WTC11 (cell line): ENCODE measurements at regions of chr1 and their contacts with region 1.

Region 1: DNA sequence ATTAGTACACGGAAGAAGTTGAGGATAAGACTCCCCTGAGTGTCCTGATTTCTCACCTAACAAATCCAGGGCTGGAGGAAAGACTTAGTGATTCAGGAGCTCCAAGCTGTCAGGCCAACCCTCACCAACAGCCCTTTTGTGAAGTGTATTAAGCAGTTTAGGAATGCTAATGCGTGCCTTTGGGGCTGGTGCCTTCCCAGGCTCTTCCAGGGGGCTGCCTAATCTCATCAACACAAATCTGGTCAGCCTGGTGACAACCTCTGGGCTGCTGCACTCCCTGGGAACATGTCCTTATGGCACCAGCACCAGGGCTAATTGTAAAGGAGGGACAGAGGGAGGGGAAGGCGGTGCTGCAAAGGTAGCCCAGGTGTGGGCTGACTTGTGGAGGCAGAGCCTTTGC is 15.5 kb downstream of the CSMD2 start:
- DNase-seq: peak; percentile 37
- ATAC-seq: peak; percentile 89
- H3K4me3 Mint-ChIP-seq: peak overlapping the region; percentile 12; the same call in 1 of the 2 replicates
- H3K27ac Mint-ChIP-seq: peak overlapping the region; percentile 92
- H3K4me1 Mint-ChIP-seq: peaks cover 59% of the 10 kb centered on the region
- H3K27me3 Mint-ChIP-seq: no peaks in the 10 kb centered on the region
- CTCF ChIP-seq: no peak

Region 2: GRCh38 chr1:34113887-34114286 is 35.6 kb before region 1 on chr1:
- CTCF ChIA-PET with region 1: interaction called, 10 read pairs
- POLR2A ChIA-PET with region 1: no interaction called
- DNase-seq: peak; percentile 35
- ATAC-seq: peak; percentile 86
- H3K4me3 Mint-ChIP-seq: no peak overlapping the region
- H3K27ac Mint-ChIP-seq: peak overlapping the region; percentile 89
- H3K4me1 Mint-ChIP-seq: peaks cover 23% of the 10 kb centered on the region
- H3K27me3 Mint-ChIP-seq: no peaks in the 10 kb centered on the region
- CTCF ChIP-seq: peak; percentile 52; the same call in 1 of the 2 replicates